ENCODE measurements at regions of chr5 and their contacts with region 1.

Region 1: DNA sequence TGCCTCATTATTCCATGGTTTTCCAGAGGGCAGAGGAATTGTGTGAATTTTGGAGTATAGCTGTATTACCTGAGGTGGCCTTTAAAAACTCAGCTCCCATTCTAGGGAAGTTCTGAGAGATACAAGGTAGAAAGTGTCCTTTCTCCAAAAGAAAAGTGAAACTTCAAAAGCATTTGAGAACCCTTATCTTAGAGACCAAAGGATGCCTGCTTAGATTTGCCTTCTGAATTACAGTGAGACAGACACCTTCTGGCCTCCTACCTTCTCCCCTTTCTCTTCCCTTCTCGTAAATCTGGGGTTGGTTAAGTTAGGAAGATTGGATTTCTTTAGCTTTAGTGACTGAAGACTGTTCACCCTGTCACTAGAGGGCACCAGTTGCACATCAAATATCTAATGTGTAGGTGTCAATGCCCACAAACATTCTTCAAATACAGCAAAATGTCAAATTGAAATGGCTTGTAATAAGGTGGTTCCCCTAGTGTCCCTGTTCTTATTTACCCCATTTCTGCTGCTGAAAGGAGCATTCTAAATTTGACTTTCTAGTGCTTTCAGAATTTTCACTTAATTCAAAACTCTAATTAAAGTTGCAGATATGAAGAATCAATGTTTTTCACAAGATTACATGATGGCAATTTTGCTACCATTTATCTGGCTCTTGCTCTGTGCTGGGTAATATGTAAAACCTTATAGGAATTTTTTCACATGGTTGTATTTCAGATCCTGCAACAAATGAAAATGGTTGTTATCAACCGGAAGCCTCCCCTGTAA is 46.7 kb downstream of the PRRC1 start:
- DNase-seq: peak; percentile 73
- H3K4me3 Mint-ChIP-seq: no peak overlapping the region
- H3K27ac Mint-ChIP-seq: no peak overlapping the region
- H3K4me1 Mint-ChIP-seq: peaks cover 9% of the 10 kb centered on the region
- H3K27me3 Mint-ChIP-seq: peaks cover 8% of the 10 kb centered on the region
- CTCF ChIP-seq: peak; percentile 51

Region 2: GRCh38 chr5:127746756-127747155 is 182.6 kb after region 1 on chr5:
- CTCF ChIA-PET with region 1: no interaction called
- intact Hi-C with region 1: loop called (anchors 1 kb)
- DNase-seq: no peak
- H3K4me3 Mint-ChIP-seq: no peak overlapping the region
- H3K27ac Mint-ChIP-seq: no peak overlapping the region
- H3K4me1 Mint-ChIP-seq: no peaks in the 10 kb centered on the region
- H3K27me3 Mint-ChIP-seq: no peaks in the 10 kb centered on the region
- CTCF ChIP-seq: peak; percentile 61

Region 3: DNA sequence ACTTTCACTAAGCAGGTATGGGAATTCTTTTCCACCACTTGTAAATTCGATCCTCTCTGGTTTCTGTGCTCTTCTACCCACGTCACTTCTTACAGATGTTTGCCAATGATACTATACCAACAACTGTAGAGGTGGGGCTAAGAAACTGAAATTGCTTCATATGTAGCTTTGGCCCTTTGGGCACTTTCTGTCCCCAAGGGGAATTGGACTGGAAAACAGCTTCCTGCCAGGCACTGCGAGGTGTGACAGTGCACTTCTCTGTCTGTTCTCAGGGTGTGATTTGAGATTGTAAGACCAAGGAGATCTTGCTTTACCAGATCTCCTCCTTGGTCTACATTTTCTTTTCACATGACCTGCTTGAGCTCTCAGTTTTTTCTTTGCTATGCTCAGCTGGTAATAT is 303.2 kb after region 1 on chr5:
- CTCF ChIA-PET with region 1: interaction called, 3 read pairs
- intact Hi-C with region 1: loop called (anchors 1 kb)
- DNase-seq: no peak
- H3K4me3 Mint-ChIP-seq: no peak overlapping the region
- H3K27ac Mint-ChIP-seq: no peak overlapping the region
- H3K4me1 Mint-ChIP-seq: peaks cover 54% of the 10 kb centered on the region
- H3K27me3 Mint-ChIP-seq: no peaks in the 10 kb centered on the region
- CTCF ChIP-seq: no peak

Region 4: GRCh38 chr5:128197896-128198522 is 633.8 kb after region 1 on chr5:
- CTCF ChIA-PET with region 1: no interaction called
- intact Hi-C with region 1: loop called (anchors 5 kb)
- DNase-seq: no peak
- H3K4me3 Mint-ChIP-seq: peak overlapping the region; percentile 48
- H3K27ac Mint-ChIP-seq: peak overlapping the region; percentile 78
- H3K4me1 Mint-ChIP-seq: peaks cover 45% of the 10 kb centered on the region
- H3K27me3 Mint-ChIP-seq: no peaks in the 10 kb centered on the region
- CTCF ChIP-seq: no peak

Region 5: GRCh38 chr5:128498844-128499455 is 934.8 kb after region 1 on chr5:
- CTCF ChIA-PET with region 1: interaction called, 3 read pairs
- intact Hi-C with region 1: loop called (anchors 1 kb)
- DNase-seq: peak; percentile 50
- H3K4me3 Mint-ChIP-seq: no peak overlapping the region
- H3K27ac Mint-ChIP-seq: no peak overlapping the region
- H3K4me1 Mint-ChIP-seq: no peaks in the 10 kb centered on the region
- H3K27me3 Mint-ChIP-seq: no peaks in the 10 kb centered on the region
- CTCF ChIP-seq: peak; percentile 46

Region 6: GRCh38 chr5:128674825-128675446 is 1110.8 kb after region 1 on chr5:
- CTCF ChIA-PET with region 1: no interaction called
- intact Hi-C with region 1: loop called (anchors 10 kb)
- DNase-seq: peak; percentile 76
- H3K4me3 Mint-ChIP-seq: no peak overlapping the region
- H3K27ac Mint-ChIP-seq: no peak overlapping the region
- H3K4me1 Mint-ChIP-seq: peaks cover 15% of the 10 kb centered on the region
- H3K27me3 Mint-ChIP-seq: no peaks in the 10 kb centered on the region
- CTCF ChIP-seq: peak; percentile 55

Region 7: GRCh38 chr5:128844354-128844923 is 1280.3 kb after region 1 on chr5:
- CTCF ChIA-PET with region 1: no interaction called
- intact Hi-C with region 1: loop called (anchors 10 kb)
- DNase-seq: no peak
- H3K4me3 Mint-ChIP-seq: no peak overlapping the region
- H3K27ac Mint-ChIP-seq: no peak overlapping the region
- H3K4me1 Mint-ChIP-seq: no peaks in the 10 kb centered on the region
- H3K27me3 Mint-ChIP-seq: no peaks in the 10 kb centered on the region
- CTCF ChIP-seq: no peak

Measured in Calu3 (cell line).